H1 (cell line): ENCODE measurements at regions of chr2 and their contacts with region 1.

Region 1: GRCh38 chr2:207710814-207711740 is at the start of gene CCNYL1:
- DNase-seq: peak; percentile 95 to 99
- H3K4me3 ChIP-seq: peak within 1 kb of the TSS; percentile 71 to 91 (median 84)
- H3K27ac ChIP-seq: peak within 1 kb of the TSS; percentile 41; the same call in 1 of the 2 replicates
- H3K4me1 ChIP-seq: peaks cover 0 to 3% (median under 1%) of the 10 kb centered on the region in 4 experiments; a peak in 4 of 7 replicates
- H3K27me3 ChIP-seq: no peaks in the 10 kb centered on the region
- CTCF ChIP-seq: no peak
- EP300 ChIP-seq: no peak
- POLR2A ChIP-seq: peak; percentile 97 to 99
- RAD21 ChIP-seq: no peak
- total RNA-seq, gene CCNYL1: 35.4 and 36.2 TPM in 2 replicates

Region 2: GRCh38 chr2:207725873-207726578 is 14.9 kb after region 1 on chr2:
- CTCF ChIA-PET with region 1: interaction called, 12 read pairs
- POLR2A ChIA-PET with region 1: interaction called, 19 read pairs
- DNase-seq: no peak
- H3K4me3 ChIP-seq: no peak overlapping the region
- H3K27ac ChIP-seq: no peak overlapping the region
- H3K4me1 ChIP-seq: 0 out of 7 replicates have a peak, but pooled peaks cover 0 to 5% (median 0%) of the 10 kb centered on the region in 4 experiments
- H3K27me3 ChIP-seq: no peaks in the 10 kb centered on the region
- CTCF ChIP-seq: no peak
- EP300 ChIP-seq: no peak
- POLR2A ChIP-seq: no peak
- RAD21 ChIP-seq: no peak